ENCODE measurements at regions of chr3 and their contacts with region 1.

Region 1: DNA sequence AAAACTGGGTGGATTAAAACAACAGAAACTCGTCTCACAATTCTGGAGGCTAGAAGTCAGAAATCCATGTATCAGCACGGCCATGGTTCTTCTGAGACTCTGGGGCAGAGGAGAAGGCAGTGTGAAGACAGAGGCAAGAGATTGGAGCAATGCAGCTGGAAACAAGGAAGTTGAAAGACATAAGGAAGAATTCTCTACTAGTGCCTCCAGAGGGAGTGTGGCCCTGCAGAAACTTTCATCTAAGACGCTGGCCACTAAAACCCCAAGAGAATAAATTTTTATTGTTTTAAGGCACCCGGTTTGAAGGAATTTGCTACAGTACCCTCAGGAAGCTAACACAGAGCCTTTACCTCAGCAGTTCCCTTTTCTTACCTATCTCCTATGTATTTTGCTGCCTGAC is 1012.2 kb upstream of the CADM2 start:
- DNase-seq: peak in 1 of 2 experiments; percentile 21
- H3K4me3 ChIP-seq: no peak overlapping the region
- H3K4me3 Mint-ChIP-seq: no peak overlapping the region
- H3K27ac Mint-ChIP-seq: no peak overlapping the region
- H3K4me1 ChIP-seq: no peaks in the 10 kb centered on the region; the same call in 1 of the 2 replicates
- H3K4me1 Mint-ChIP-seq: no peaks in the 10 kb centered on the region
- H3K27me3 ChIP-seq: no peaks in the 10 kb centered on the region
- H3K27me3 Mint-ChIP-seq: no peaks in the 10 kb centered on the region
- CTCF ChIP-seq: peak in 1 of 2 experiments; percentile 24

Region 2: GRCh38 chr3:83928391-83928790 is 18.2 kb before region 1 on chr3:
- CTCF ChIA-PET with region 1: no interaction called
- POLR2A ChIA-PET with region 1: no interaction called
- intact Hi-C with region 1: no loop called
- DNase-seq: peak in 1 of 2 experiments; percentile 19
- H3K4me3 ChIP-seq: no peak overlapping the region
- H3K4me3 Mint-ChIP-seq: no peak overlapping the region
- H3K27ac Mint-ChIP-seq: no peak overlapping the region
- H3K4me1 ChIP-seq: no peaks in the 10 kb centered on the region
- H3K4me1 Mint-ChIP-seq: no peaks in the 10 kb centered on the region
- H3K27me3 ChIP-seq: no peaks in the 10 kb centered on the region
- H3K27me3 Mint-ChIP-seq: no peaks in the 10 kb centered on the region
- CTCF ChIP-seq: peak; percentile 28 to 38

Region 3: GRCh38 chr3:84110787-84111186 is 164.2 kb after region 1 on chr3:
- CTCF ChIA-PET with region 1: no interaction called
- POLR2A ChIA-PET with region 1: no interaction called
- intact Hi-C with region 1: no loop called
- DNase-seq: no peak
- H3K4me3 ChIP-seq: no peak overlapping the region
- H3K4me3 Mint-ChIP-seq: no peak overlapping the region
- H3K27ac Mint-ChIP-seq: no peak overlapping the region
- H3K4me1 ChIP-seq: no peaks in the 10 kb centered on the region
- H3K4me1 Mint-ChIP-seq: no peaks in the 10 kb centered on the region
- H3K27me3 ChIP-seq: no peaks in the 10 kb centered on the region
- H3K27me3 Mint-ChIP-seq: no peaks in the 10 kb centered on the region
- CTCF ChIP-seq: no peak

Region 4: GRCh38 chr3:84136425-84136824 is 189.9 kb after region 1 on chr3:
- CTCF ChIA-PET with region 1: interaction called, 5 read pairs
- POLR2A ChIA-PET with region 1: no interaction called
- intact Hi-C with region 1: loop called (anchors 10 kb)
- DNase-seq: no peak
- H3K4me3 ChIP-seq: no peak overlapping the region
- H3K4me3 Mint-ChIP-seq: no peak overlapping the region
- H3K27ac Mint-ChIP-seq: no peak overlapping the region
- H3K4me1 ChIP-seq: no peaks in the 10 kb centered on the region
- H3K4me1 Mint-ChIP-seq: no peaks in the 10 kb centered on the region
- H3K27me3 ChIP-seq: no peaks in the 10 kb centered on the region
- H3K27me3 Mint-ChIP-seq: peaks cover 3% of the 10 kb centered on the region
- CTCF ChIP-seq: no peak

Measured in Caco-2 (cell line).